Activated CD4-positive, alpha-beta T cell treated with anti-CD3 and anti-CD28 coated beads for 36 hours (primary cell): ENCODE measurements at regions of chr11 and their contacts with region 1.

Region 1: GRCh38 chr11:10933455-10934292 is 75.8 kb upstream of the ZBED5 start:
- DNase-seq: peak; percentile 91
- ATAC-seq: peak; percentile 91
- H3K4me3 Mint-ChIP-seq: peak overlapping the region; percentile 65
- H3K27ac Mint-ChIP-seq: peak overlapping the region; percentile 16
- H3K4me1 Mint-ChIP-seq: peaks cover 9% of the 10 kb centered on the region
- H3K27me3 Mint-ChIP-seq: peaks cover 27% of the 10 kb centered on the region

Region 2: GRCh38 chr11:10792398-10792975 is 141.2 kb before region 1 on chr11:
- CTCF ChIA-PET with region 1: interaction called, 18 read pairs
- POLR2A ChIA-PET with region 1: interaction called, 3 read pairs
- intact Hi-C with region 1: loop called (anchors 1 to 2 kb)
- DNase-seq: peak; percentile 93
- ATAC-seq: peak; percentile 96
- H3K4me3 Mint-ChIP-seq: no peak overlapping the region
- H3K27ac Mint-ChIP-seq: no peak overlapping the region
- H3K4me1 Mint-ChIP-seq: peaks cover 21% of the 10 kb centered on the region
- H3K27me3 Mint-ChIP-seq: peaks cover 3% of the 10 kb centered on the region

Region 3: DNA sequence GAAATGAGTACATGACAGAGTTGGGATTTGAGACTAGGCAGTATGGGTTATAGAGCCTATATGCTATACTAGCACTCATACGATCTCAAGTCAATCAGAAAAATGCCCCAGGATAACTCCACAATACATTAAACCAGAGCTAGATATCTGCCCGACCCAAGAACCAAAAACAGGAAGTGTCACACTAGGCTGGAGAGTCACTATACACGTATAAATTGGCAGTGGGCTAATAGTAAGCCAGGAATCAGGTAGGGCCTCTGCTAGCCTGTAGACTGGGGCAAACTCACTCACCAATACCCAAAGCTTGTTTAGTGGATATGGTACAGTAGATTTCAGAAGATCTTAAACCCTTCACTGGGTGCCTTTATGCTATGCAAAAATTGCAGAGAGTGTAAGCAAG is 108.8 kb before region 1 on chr11:
- CTCF ChIA-PET with region 1: no interaction called
- POLR2A ChIA-PET with region 1: no interaction called
- intact Hi-C with region 1: no loop called
- DNase-seq: no peak
- ATAC-seq: no peak
- H3K4me3 Mint-ChIP-seq: no peak overlapping the region
- H3K27ac Mint-ChIP-seq: no peak overlapping the region
- H3K4me1 Mint-ChIP-seq: peaks cover 8% of the 10 kb centered on the region
- H3K27me3 Mint-ChIP-seq: no peaks in the 10 kb centered on the region

Region 4: DNA sequence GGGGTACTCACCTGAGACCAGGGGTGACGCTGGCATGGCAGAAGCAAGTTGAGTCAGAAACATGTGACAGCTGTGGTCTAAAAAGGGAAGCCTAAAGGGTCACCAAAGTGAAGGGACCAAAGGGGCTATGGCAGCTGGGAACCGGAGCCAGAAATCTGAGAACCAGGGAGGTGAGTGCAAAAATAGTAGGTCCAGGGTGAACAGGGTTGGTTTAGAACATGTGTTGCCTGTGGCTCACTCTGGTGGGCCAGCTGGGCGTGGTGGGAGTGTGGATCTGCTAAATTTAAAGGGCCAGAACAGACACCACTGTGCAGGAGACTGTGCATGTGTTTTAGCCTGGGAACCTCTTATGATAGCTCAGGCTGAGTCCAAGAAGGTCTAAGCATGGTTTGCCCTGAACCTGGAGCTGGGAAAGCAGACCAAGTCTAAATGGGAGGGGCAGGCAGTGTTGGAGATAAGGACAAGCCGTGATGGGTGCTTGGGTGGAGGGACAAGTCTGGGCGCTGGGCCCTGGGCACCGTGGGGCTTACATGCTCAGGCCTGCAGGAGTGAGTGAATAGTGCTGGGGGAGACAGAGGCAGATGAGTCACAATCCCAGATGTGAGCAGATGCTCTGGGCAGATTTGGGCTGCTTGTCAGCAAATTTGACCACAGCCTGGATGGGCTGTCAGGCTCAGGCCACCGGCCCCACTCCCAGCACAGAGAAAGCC is 34.4 kb before region 1 on chr11:
- CTCF ChIA-PET with region 1: interaction called, 5 read pairs
- POLR2A ChIA-PET with region 1: no interaction called
- intact Hi-C with region 1: loop called in 1 of 2 experiments (anchors 2 kb)
- DNase-seq: no peak
- ATAC-seq: peak; percentile 51
- H3K4me3 Mint-ChIP-seq: no peak overlapping the region
- H3K27ac Mint-ChIP-seq: peak overlapping the region; percentile 91
- H3K4me1 Mint-ChIP-seq: peaks cover 29% of the 10 kb centered on the region
- H3K27me3 Mint-ChIP-seq: peaks cover 5% of the 10 kb centered on the region

Region 5: DNA sequence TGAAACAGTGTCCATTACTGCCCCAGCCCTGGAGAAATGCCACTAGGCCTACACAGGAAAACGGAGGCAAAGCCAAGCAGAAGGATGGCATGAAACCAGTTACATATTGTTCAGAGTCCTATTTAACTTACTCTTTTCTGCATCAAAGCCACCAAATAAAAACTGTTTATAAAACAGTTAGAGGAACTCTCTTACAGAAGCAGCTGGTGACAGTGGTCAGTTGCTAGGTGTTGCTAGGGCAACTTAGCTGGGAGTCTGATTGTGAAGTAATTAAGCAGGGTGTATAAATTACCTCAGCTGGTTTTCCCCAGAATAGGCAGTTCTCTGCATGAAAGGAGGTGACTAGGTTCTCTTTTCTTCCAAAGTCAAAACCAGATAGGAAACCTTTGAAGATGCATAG is 39.7 kb after region 1 on chr11:
- CTCF ChIA-PET with region 1: no interaction called
- POLR2A ChIA-PET with region 1: no interaction called
- intact Hi-C with region 1: no loop called
- DNase-seq: no peak
- ATAC-seq: no peak
- H3K4me3 Mint-ChIP-seq: no peak overlapping the region
- H3K27ac Mint-ChIP-seq: no peak overlapping the region
- H3K4me1 Mint-ChIP-seq: no peaks in the 10 kb centered on the region
- H3K27me3 Mint-ChIP-seq: peaks cover 2% of the 10 kb centered on the region

Region 6: DNA sequence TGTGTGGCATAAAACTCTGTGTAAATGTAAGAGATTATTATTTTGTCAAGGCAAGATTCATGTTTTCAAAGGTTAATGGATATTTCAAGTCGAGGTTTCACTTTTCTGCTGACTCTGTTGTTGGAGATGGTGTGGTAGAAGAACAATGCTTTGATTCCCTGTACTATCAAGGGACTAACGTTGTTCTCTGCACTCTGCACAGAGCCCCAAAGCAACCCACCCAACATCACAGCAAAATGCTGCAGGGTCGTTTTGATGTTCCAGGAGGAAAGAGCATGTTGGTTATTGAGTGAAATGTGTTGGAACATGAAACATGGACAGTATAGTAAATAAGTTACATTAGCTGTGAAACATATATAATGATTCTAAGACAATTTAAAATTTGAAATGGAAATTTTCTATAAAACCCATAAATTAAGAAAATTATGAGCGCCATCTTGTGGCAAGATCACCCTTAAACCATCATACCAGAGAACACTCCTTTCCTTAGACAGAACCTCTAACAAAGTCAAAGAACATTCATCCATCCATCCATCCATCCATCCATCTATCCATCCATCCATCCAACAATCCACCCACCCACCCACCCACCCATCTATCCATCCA is 88.6 kb after region 1 on chr11:
- CTCF ChIA-PET with region 1: interaction called, 51 read pairs
- POLR2A ChIA-PET with region 1: no interaction called
- intact Hi-C with region 1: loop called (anchors 1 kb)
- DNase-seq: peak; percentile 27
- ATAC-seq: no peak
- H3K4me3 Mint-ChIP-seq: no peak overlapping the region
- H3K27ac Mint-ChIP-seq: no peak overlapping the region
- H3K4me1 Mint-ChIP-seq: no peaks in the 10 kb centered on the region
- H3K27me3 Mint-ChIP-seq: no peaks in the 10 kb centered on the region

Region 7: DNA sequence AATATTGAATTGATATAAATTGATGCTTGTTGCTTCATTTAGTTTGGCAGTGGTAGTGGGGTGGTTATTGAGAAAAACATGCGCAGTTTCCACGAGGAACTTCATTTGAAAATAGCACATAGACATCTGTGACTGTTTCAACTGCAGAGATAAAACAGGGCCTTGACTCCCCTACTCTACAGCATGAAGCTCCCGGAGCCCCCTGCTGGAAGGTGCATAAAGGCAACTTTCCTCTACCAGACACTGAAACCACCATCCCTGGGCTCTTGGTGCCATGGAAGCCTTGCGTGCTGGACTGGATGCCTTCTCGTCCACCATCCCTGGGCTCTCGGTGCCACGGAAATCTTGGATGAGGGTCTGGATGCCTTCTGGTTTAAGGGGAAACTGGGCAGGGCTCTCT is 223.5 kb after region 1 on chr11:
- CTCF ChIA-PET with region 1: interaction called, 8 read pairs
- POLR2A ChIA-PET with region 1: no interaction called
- intact Hi-C with region 1: loop called in 1 of 2 experiments (anchors 5 kb)
- DNase-seq: peak; percentile 69
- ATAC-seq: peak; percentile 42
- H3K4me3 Mint-ChIP-seq: no peak overlapping the region
- H3K27ac Mint-ChIP-seq: peak overlapping the region; percentile 76
- H3K4me1 Mint-ChIP-seq: peaks cover 26% of the 10 kb centered on the region
- H3K27me3 Mint-ChIP-seq: no peaks in the 10 kb centered on the region

Region 8: DNA sequence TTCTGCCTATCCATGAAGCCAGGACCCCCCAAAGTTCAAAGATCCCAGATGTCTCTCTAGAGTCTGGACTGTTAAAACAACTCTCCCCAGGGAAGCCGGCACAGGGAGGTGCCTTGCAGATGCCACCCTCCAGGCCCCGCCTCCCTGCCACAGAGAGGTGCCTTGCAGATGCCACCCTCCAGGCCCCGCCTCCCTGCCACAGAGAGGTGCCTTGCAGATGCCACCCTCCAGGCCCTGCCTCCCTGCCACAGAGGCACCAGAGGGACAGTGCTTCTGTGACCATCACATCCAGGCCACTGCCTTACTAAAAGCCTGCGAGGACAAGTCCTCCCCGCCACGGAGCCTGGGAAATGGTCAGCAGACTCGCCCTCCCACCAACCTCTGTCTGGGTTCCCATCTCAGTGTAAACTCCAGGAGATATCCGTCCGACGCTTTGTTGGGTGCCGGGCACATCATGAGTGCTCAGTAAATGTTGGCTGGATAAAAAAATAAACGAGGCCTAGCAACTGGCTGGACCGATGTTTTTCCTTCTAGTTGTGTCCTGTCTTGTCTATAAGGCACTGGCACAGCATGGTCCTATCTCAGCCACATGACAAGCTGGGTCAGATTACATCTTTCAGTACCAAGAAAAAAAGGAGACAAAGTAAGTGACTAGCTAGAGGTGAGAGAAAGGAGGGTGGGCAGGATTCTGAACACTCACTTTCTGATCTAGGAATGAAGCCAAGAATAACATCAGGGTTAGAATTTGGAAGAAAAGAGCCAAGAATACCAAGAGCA is 510.5 kb after region 1 on chr11:
- CTCF ChIA-PET with region 1: no interaction called
- POLR2A ChIA-PET with region 1: no interaction called
- intact Hi-C with region 1: no loop called
- DNase-seq: no peak
- ATAC-seq: no peak
- H3K4me3 Mint-ChIP-seq: no peak overlapping the region
- H3K27ac Mint-ChIP-seq: no peak overlapping the region
- H3K4me1 Mint-ChIP-seq: no peaks in the 10 kb centered on the region
- H3K27me3 Mint-ChIP-seq: peaks cover 4% of the 10 kb centered on the region

Region 9: GRCh38 chr11:11787305-11788062 is 853.8 kb after region 1 on chr11:
- CTCF ChIA-PET with region 1: interaction called, 5 read pairs
- POLR2A ChIA-PET with region 1: no interaction called
- intact Hi-C with region 1: loop called (anchors 2 kb)
- DNase-seq: peak; percentile 82
- ATAC-seq: peak; percentile 90
- H3K4me3 Mint-ChIP-seq: no peak overlapping the region
- H3K27ac Mint-ChIP-seq: no peak overlapping the region
- H3K4me1 Mint-ChIP-seq: no peaks in the 10 kb centered on the region
- H3K27me3 Mint-ChIP-seq: peaks cover 2% of the 10 kb centered on the region